IMR-90 (cell line): ENCODE measurements at regions of chr10 and their contacts with region 1.

Region 1: DNA sequence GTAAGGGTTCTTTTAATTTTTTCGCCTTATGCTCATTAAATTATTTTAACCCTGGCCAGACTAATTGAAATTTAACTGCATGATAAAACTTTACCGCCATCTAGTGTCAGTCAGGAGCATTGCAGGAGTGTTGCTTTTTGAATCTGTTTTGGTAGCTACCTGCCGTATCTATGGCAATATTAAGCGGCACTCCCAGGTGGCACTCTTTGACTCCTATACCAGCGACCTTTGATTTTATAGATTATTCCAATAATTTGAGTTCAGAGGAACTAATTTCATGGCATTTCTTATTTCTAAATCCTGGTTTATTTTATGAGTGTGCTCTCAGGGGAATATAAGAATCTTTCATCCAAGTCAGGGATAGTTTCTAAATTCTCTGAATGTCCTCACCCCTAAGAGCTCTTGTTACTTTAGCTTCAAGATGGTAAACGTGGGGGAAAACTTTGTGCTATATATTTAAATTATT is 198.9 kb downstream of the REEP3 start:
- DNase-seq: peak; percentile 45
- ATAC-seq: peak; percentile 69
- H3K4me3 ChIP-seq: no peak overlapping the region
- H3K27ac ChIP-seq: no peak overlapping the region
- H3K4me1 ChIP-seq: no peaks in the 10 kb centered on the region
- H3K27me3 ChIP-seq: peaks cover 7% of the 10 kb centered on the region
- CTCF ChIP-seq: peak; percentile 96
- POLR2A ChIP-seq: no peak
- RAD21 ChIP-seq: peak; percentile 93

Region 2: GRCh38 chr10:63166742-63167258 is 553.3 kb before region 1 on chr10:
- CTCF ChIA-PET with region 1: interaction called, 23 read pairs
- POLR2A ChIA-PET with region 1: interaction called, 3 read pairs
- dilution Hi-C with region 1: loop called (anchors 25 kb)
- in situ Hi-C with region 1: loop called (anchors 5 kb)
- intact Hi-C with region 1: loop called (anchors 2 kb)
- DNase-seq: peak; percentile 85
- ATAC-seq: peak; percentile 73
- H3K4me3 ChIP-seq: no peak overlapping the region
- H3K27ac ChIP-seq: no peak overlapping the region
- H3K4me1 ChIP-seq: 0 out of 2 replicates have a peak, but pooled peaks cover 2% of the 10 kb centered on the region
- H3K27me3 ChIP-seq: no peaks in the 10 kb centered on the region
- CTCF ChIP-seq: peak; percentile 82
- POLR2A ChIP-seq: no peak
- RAD21 ChIP-seq: peak; percentile 78

Region 3: DNA sequence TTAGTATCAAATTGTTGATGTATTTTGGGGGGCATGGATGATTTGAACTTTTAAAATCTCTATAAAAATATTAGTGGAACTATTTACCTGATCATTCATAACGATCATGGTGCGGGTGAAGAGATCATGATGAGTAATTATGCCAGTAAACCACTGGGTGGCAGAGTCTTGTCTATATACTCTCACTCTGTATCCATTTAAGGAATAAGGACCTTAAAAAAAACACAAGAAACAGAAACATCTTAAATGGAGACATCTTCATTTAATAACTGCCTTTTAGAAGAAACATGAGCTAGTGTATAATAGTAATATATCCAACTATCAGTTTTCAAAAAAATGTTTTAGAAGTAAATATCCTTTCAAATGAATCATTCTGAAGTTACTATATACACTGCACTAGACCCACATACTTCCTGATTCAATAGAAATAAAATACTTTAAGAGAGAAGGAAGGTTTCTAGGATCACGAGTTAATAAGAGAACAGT is 502.9 kb before region 1 on chr10:
- CTCF ChIA-PET with region 1: interaction called, 5 read pairs
- POLR2A ChIA-PET with region 1: no interaction called
- dilution Hi-C with region 1: no loop called
- in situ Hi-C with region 1: no loop called
- intact Hi-C with region 1: loop called (anchors 2 kb)
- DNase-seq: peak; percentile 77
- ATAC-seq: peak; percentile 95
- H3K4me3 ChIP-seq: no peak overlapping the region
- H3K27ac ChIP-seq: no peak overlapping the region
- H3K4me1 ChIP-seq: no peaks in the 10 kb centered on the region
- H3K27me3 ChIP-seq: no peaks in the 10 kb centered on the region
- CTCF ChIP-seq: peak; percentile 66
- POLR2A ChIP-seq: no peak
- RAD21 ChIP-seq: peak; percentile 65

Region 4: DNA sequence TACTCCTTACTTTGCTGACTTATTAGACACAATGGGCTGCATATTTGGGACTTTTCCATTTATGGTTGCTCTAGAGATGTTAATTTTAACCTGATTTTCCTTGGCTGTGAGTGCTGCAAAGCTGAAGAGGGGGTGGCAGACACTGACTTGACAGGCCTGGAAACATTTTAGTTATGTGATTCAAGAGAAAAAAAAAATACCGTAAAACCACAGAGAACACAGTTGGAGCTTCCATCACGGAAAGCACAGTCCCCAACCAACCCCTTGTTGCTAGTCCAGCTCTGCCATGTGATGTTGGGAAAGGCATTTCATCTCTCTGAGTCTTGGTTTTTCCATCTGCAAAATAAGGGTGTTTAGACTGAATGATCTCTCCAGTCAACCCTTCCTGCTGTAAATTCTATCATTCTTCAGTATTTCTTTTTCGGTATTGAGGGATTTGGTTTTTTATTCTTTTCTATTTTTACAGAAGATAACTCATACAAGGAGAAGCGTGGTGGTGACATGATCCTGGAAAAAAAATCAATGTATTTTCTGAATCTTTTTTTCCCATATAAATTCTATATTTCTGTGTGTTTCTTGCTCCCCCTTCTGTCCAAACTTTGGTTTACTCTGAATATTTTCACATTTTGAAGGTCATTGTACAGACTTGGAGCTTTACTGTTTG is 47.2 kb after region 1 on chr10:
- CTCF ChIA-PET with region 1: interaction called, 6 read pairs
- POLR2A ChIA-PET with region 1: no interaction called
- dilution Hi-C with region 1: no loop called
- in situ Hi-C with region 1: no loop called
- intact Hi-C with region 1: loop called (anchors 5 kb)
- DNase-seq: peak; percentile 29
- ATAC-seq: peak; percentile 69
- H3K4me3 ChIP-seq: no peak overlapping the region
- H3K27ac ChIP-seq: no peak overlapping the region
- H3K4me1 ChIP-seq: peaks cover 4% of the 10 kb centered on the region; the same call in 1 of the 2 replicates
- H3K27me3 ChIP-seq: peaks cover 9% of the 10 kb centered on the region
- CTCF ChIP-seq: peak; percentile 55
- POLR2A ChIP-seq: no peak
- RAD21 ChIP-seq: peak; percentile 47